Ovary (tissue), 10 donors: ENCODE measurements at regions of chr16 and their contacts with region 1.

Region 1: DNA sequence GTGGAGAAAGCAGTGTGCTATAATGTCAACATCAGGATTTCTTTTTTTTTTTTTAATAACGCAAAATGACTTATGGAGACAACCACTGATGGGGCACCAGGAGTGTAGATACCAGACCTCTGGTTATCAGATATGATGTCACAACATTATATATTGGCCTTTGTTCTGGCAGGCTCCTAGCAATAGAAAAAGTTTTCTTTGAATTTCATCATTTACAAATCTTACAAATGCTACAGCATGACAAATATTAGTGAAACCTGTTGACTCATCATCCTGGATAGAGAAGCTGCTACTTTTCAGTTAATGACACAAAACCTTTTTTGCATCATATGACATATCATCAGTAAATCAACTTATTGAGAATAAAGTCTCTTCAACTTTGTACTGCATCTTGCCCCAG is 6.1 kb downstream of the THUMPD1 start:
- DNase-seq: no peak
- H3K4me3 ChIP-seq: no peak overlapping the region
- H3K27ac ChIP-seq: no peak overlapping the region
- H3K4me1 ChIP-seq: peaks cover 9% of the 10 kb centered on the region
- H3K27me3 ChIP-seq: no peaks in the 10 kb centered on the region
- CTCF ChIP-seq: no peak
- EP300 ChIP-seq: no peak
- POLR2A ChIP-seq: no peak

Region 2: DNA sequence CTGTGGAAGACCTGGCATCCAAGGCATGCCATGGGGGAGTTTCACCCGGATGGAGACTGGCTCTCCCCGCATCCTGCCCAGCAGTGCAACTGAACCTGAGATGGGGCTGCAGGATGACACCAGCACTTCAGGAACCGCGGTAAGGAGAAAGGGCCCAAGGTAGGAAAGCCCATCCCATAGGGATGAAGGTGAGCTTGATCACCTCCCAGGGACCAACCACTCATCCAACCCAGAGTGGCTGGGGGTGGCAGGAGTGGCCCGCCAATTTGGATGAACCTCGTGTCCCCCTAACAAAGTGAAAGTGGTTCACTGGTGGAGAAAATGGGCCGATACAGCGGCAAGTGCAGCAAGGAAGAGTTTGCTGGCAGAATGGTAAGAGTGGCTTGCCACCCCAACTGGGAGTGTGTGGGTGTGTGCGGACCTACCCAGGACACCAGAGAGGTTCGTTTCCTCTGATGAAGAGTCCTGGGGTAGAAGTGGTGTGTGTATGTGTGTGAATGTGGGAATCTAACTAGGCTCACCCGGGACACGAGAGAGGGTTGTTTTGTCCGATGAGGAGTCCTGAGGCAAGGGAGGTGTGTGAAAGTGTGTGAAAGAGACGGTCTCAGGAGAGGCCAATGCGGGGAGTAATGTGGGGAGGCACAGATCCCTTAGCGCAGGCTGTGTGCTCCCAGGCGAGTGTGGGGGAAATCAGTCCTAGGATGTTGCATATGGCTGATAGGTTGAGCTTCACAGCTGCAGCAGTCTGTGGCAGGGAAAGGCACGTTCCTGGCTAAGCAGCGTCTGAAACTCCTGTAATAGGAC is 60.6 kb before region 1 on chr16:
- intact Hi-C with region 1: loop called in 1 of 4 experiments (anchors 5 kb)
- DNase-seq: peak; percentile 36 to 57 (median 45)
- H3K4me3 ChIP-seq: peak overlapping the region; percentile 78
- H3K27ac ChIP-seq: peak overlapping the region; percentile 89 to 92
- H3K4me1 ChIP-seq: peaks cover 13% of the 10 kb centered on the region
- H3K27me3 ChIP-seq: no peaks in the 10 kb centered on the region
- CTCF ChIP-seq: no peak
- EP300 ChIP-seq: no peak
- POLR2A ChIP-seq: no peak

Region 3: DNA sequence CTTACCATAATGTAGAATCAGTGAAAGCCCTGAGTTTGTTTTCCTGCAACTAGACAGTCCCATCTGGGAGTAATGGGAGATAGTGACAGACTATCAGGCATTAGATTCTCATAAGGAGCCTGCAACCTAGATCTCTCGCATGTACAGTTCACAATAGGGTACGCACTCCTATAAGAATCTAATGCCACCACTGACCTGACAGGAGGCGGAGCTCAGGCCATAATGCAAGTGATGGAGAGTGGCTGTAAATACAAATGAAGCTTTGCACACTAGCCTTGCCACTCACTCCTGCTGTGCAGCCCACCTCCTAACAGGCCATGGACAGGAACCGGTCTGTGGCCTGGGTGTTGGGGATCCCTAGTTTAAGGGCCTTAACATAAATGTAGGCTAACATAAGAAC is 15.2 kb before region 1 on chr16:
- intact Hi-C with region 1: no loop called
- DNase-seq: no peak
- H3K4me3 ChIP-seq: no peak overlapping the region
- H3K27ac ChIP-seq: no peak overlapping the region
- H3K4me1 ChIP-seq: no peaks in the 10 kb centered on the region
- H3K27me3 ChIP-seq: no peaks in the 10 kb centered on the region
- CTCF ChIP-seq: no peak
- EP300 ChIP-seq: no peak
- POLR2A ChIP-seq: no peak